PC-3 (cell line): ENCODE measurements at regions of chr14 and their contacts with region 1.

Region 1: GRCh38 chr14:56491299-56492285 is 88.0 kb upstream of the TMEM260 start:
- DNase-seq: peak; percentile 87
- ATAC-seq: peak; percentile 72
- H3K4me3 ChIP-seq: no peak overlapping the region
- H3K27ac ChIP-seq: no peak overlapping the region
- H3K4me1 ChIP-seq: no peaks in the 10 kb centered on the region
- H3K27me3 ChIP-seq: peaks cover 45% of the 10 kb centered on the region
- CTCF ChIP-seq: peak; percentile 97

Region 2: GRCh38 chr14:56452940-56453339 is 38.7 kb before region 1 on chr14:
- CTCF ChIA-PET with region 1: no interaction called
- POLR2A ChIA-PET with region 1: no interaction called
- intact Hi-C with region 1: no loop called
- DNase-seq: no peak
- ATAC-seq: no peak
- H3K4me3 ChIP-seq: no peak overlapping the region
- H3K27ac ChIP-seq: no peak overlapping the region
- H3K4me1 ChIP-seq: no peaks in the 10 kb centered on the region
- H3K27me3 ChIP-seq: peaks cover 59% of the 10 kb centered on the region
- CTCF ChIP-seq: no peak

Region 3: GRCh38 chr14:56659964-56660551 is 168.5 kb after region 1 on chr14:
- CTCF ChIA-PET with region 1: no interaction called
- POLR2A ChIA-PET with region 1: no interaction called
- intact Hi-C with region 1: loop called (anchors 2 kb)
- DNase-seq: peak; percentile 82
- ATAC-seq: peak; percentile 83
- H3K4me3 ChIP-seq: no peak overlapping the region
- H3K27ac ChIP-seq: no peak overlapping the region
- H3K4me1 ChIP-seq: no peaks in the 10 kb centered on the region
- H3K27me3 ChIP-seq: peaks cover 41% of the 10 kb centered on the region
- CTCF ChIP-seq: peak; percentile 98

Region 4: DNA sequence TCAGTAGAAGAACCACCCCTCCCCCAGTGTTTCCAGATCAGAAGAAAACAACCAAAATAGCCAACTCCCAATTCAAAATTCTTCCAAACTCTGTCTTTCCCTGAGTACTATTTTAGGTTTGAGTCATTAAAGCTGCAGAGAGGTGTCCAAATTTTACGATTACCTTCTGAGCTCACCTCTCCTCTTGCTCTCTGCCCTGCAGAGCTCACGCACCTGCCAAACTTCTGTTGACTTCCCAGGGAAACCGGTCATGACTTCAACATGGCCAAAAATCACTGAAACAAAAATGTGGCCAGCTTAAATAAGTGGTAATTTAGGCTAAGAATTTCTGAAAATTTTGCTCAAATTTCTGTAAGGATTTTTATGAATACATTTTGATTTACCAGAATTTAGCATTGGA is 389.6 kb after region 1 on chr14:
- CTCF ChIA-PET with region 1: no interaction called
- POLR2A ChIA-PET with region 1: no interaction called
- intact Hi-C with region 1: no loop called
- DNase-seq: no peak
- ATAC-seq: no peak
- H3K4me3 ChIP-seq: no peak overlapping the region
- H3K27ac ChIP-seq: no peak overlapping the region
- H3K4me1 ChIP-seq: no peaks in the 10 kb centered on the region
- H3K27me3 ChIP-seq: peaks cover 48% of the 10 kb centered on the region
- CTCF ChIP-seq: no peak

Region 5: DNA sequence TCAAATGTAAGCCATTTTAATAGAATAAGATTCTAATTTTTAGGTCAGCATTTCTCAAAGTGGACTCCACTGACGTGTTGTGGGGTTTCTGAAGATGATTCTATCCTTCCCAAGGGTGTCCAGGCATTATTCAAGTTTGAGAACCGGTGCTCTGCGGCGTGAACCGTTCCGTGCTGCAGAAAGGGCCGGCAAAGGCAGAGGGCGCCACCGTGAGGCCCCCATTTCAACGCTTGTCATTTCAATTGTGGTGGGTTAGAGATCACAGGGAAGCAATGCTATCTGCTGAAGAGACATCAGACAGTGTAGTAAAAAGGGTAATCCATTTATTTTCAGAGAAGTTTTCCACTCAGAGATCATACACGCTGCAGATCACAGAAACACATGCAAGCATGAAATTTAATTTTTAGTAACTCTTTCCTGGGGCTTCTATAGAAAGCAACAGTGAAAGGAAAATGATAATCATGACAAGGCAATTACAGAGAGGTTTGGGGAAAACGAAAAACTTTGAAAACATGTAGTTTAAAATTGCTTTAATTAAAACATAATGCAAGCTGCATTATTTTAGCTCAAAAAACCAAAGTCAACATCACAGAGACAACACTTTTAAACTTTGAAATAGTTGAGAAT is 575.4 kb after region 1 on chr14:
- CTCF ChIA-PET with region 1: no interaction called
- POLR2A ChIA-PET with region 1: no interaction called
- intact Hi-C with region 1: loop called (anchors 2 kb)
- DNase-seq: peak; percentile 79
- ATAC-seq: peak; percentile 94
- H3K4me3 ChIP-seq: no peak overlapping the region
- H3K27ac ChIP-seq: no peak overlapping the region
- H3K4me1 ChIP-seq: no peaks in the 10 kb centered on the region
- H3K27me3 ChIP-seq: peaks cover 88% of the 10 kb centered on the region
- CTCF ChIP-seq: peak; percentile 99

Region 6: GRCh38 chr14:57199921-57200320 is 708.3 kb after region 1 on chr14:
- CTCF ChIA-PET with region 1: no interaction called
- POLR2A ChIA-PET with region 1: no interaction called
- intact Hi-C with region 1: loop called (anchors 5 kb)
- DNase-seq: peak; percentile 56
- ATAC-seq: peak; percentile 73
- H3K4me3 ChIP-seq: no peak overlapping the region
- H3K27ac ChIP-seq: no peak overlapping the region
- H3K4me1 ChIP-seq: peaks cover 5% of the 10 kb centered on the region; the same call in 1 of the 2 replicates
- H3K27me3 ChIP-seq: no peaks in the 10 kb centered on the region
- CTCF ChIP-seq: no peak

Region 7: DNA sequence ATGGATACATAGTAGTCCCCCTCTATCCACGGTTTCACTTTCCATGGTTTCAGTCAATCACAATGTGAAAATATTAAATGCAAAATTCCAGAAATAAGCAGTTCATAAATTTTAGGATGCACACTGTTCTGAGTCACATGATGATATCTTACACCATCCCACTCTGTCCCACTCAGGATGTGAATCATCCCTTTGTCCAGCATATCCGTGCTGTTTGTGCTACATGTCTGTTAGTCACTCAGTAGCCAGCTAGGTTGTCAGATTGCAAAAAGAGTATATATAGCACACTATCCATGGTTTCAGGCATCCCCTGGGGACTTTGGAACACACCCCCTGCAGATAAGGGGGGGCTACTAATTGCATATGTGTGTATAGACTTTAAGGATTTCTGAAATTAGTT is 890.7 kb after region 1 on chr14:
- CTCF ChIA-PET with region 1: no interaction called
- POLR2A ChIA-PET with region 1: no interaction called
- intact Hi-C with region 1: loop called (anchors 2 kb)
- DNase-seq: peak; percentile 99
- ATAC-seq: peak; percentile 99
- H3K4me3 ChIP-seq: no peak overlapping the region
- H3K27ac ChIP-seq: peak overlapping the region; percentile 45
- H3K4me1 ChIP-seq: peaks cover 33% of the 10 kb centered on the region
- H3K27me3 ChIP-seq: no peaks in the 10 kb centered on the region
- CTCF ChIP-seq: no peak